ENCODE measurements at regions of chr18 and their contacts with region 1.

Region 1: GRCh38 chr18:34976899-34977837 is 64.0 kb upstream of the MAPRE2 start:
- DNase-seq: peak; percentile 89 to 93
- ATAC-seq: peak; percentile 82
- H3K4me3 ChIP-seq: peak overlapping the region; percentile 55 to 88
- H3K27ac ChIP-seq: peak overlapping the region in 1 of 2 donors; percentile 14
- H3K4me1 ChIP-seq: no peaks in the 10 kb centered on the region
- H3K27me3 ChIP-seq: no peaks in the 10 kb centered on the region

Region 2: DNA sequence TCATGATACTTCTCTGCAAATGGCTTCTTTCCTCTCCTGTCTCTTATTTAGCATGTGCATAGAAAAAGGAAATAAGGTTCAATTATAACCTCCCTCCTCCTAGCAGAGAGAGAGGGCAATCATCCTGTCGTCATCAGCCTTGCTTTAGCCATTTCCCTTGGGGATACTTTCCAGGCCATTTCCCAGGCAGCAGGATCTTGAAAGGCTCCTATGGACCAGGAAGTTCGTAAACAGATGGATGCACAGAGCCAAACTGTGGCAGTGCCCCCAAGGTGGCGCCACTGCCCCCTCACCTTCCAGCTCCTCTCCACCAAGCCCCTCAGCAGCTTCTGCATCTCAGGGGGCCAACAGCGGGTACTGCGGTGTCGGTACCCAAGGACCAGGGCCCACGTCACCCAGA is 109.6 kb before region 1 on chr18:
- intact Hi-C with region 1: no loop called
- DNase-seq: no peak
- ATAC-seq: peak; percentile 52
- H3K4me3 ChIP-seq: no peak overlapping the region
- H3K27ac ChIP-seq: peak overlapping the region in 1 of 2 donors; percentile 85
- H3K4me1 ChIP-seq: no peaks in the 10 kb centered on the region
- H3K27me3 ChIP-seq: no peaks in the 10 kb centered on the region

Region 3: DNA sequence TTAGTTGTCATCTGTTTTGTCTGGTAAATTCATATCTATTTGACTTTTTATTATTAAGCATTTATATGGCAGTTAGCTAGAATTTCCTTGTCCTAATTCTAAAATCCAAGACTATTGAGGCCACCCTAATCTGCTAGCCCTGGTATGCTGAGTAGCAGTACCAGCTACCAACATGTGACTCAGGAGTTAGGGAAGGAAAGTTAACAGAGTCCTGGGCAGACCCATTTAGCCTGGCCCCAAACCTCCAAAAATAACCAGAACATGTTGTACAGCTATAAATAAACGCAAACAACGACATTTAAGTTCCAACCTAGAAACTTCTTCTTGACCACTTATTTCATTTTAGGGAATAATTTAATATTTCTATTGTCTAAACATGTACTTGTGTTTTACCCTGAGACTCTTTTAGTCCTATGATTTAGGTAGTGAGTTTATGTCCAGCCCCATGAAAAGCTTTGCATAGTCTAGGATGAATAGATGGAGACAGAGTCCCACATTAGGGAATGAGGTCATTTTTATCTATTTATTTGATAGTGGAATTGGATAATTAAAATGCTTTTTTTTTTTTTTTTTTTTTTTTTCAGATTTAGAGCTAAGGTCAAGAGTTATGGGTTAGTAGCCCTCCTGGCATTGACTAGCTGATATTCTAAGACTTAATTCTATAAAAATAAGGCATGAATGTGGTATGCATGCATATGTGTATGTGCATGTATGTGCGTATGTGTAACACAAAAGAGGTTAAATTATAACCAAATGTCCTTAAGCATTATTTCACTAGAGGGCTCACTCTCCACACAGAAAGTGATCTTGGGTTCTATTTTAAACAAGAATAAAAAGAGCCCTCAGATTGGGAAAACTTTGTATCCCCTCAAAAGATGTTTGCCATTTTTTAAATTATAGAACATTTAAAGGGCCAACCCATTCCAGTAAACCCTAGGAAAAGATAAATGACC is 96.0 kb before region 1 on chr18:
- intact Hi-C with region 1: loop called in 1 of 2 experiments (anchors 5 kb)
- DNase-seq: no peak
- ATAC-seq: peak; percentile 90
- H3K4me3 ChIP-seq: no peak overlapping the region
- H3K27ac ChIP-seq: peak overlapping the region in 1 of 2 donors; percentile 90
- H3K4me1 ChIP-seq: peaks cover 11 to 13% of the 10 kb centered on the region in 2 donors
- H3K27me3 ChIP-seq: no peaks in the 10 kb centered on the region

Region 4: GRCh38 chr18:34912010-34912721 is 65.0 kb before region 1 on chr18:
- intact Hi-C with region 1: loop called in 1 of 2 experiments (anchors 5 kb)
- DNase-seq: no peak
- ATAC-seq: no peak
- H3K4me3 ChIP-seq: no peak overlapping the region
- H3K27ac ChIP-seq: no peak overlapping the region
- H3K4me1 ChIP-seq: peaks cover 0 to 3% of the 10 kb centered on the region in 2 donors
- H3K27me3 ChIP-seq: no peaks in the 10 kb centered on the region

Region 5: GRCh38 chr18:34942975-34943374 is 34.2 kb before region 1 on chr18:
- intact Hi-C with region 1: no loop called
- DNase-seq: no peak
- ATAC-seq: no peak
- H3K4me3 ChIP-seq: no peak overlapping the region
- H3K27ac ChIP-seq: no peak overlapping the region
- H3K4me1 ChIP-seq: peaks cover 2% of the 10 kb centered on the region in 2 donors
- H3K27me3 ChIP-seq: no peaks in the 10 kb centered on the region

Region 6: GRCh38 chr18:35071819-35072247 is 94.7 kb after region 1 on chr18:
- intact Hi-C with region 1: no loop called
- DNase-seq: no peak
- ATAC-seq: no peak
- H3K4me3 ChIP-seq: no peak overlapping the region
- H3K27ac ChIP-seq: peak overlapping the region in 1 of 2 donors; percentile 85
- H3K4me1 ChIP-seq: peaks cover 8 to 9% of the 10 kb centered on the region in 2 donors
- H3K27me3 ChIP-seq: no peaks in the 10 kb centered on the region

Region 7: GRCh38 chr18:35122586-35123224 is 145.5 kb after region 1 on chr18:
- intact Hi-C with region 1: no loop called
- DNase-seq: no peak
- ATAC-seq: no peak
- H3K4me3 ChIP-seq: no peak overlapping the region
- H3K27ac ChIP-seq: no peak overlapping the region
- H3K4me1 ChIP-seq: no peaks in the 10 kb centered on the region
- H3K27me3 ChIP-seq: no peaks in the 10 kb centered on the region

Measured in aorta (tissue), 5 donors.